Activated naive CD8-positive, alpha-beta T cell treated with anti-CD3 and anti-CD28 coated beads, Interleukin-2, amount 10 ng/mL, durations not matched to agents 7 days and 5 days (primary cell): ENCODE measurements at regions of chr12 and their contacts with region 1.

Region 1: DNA sequence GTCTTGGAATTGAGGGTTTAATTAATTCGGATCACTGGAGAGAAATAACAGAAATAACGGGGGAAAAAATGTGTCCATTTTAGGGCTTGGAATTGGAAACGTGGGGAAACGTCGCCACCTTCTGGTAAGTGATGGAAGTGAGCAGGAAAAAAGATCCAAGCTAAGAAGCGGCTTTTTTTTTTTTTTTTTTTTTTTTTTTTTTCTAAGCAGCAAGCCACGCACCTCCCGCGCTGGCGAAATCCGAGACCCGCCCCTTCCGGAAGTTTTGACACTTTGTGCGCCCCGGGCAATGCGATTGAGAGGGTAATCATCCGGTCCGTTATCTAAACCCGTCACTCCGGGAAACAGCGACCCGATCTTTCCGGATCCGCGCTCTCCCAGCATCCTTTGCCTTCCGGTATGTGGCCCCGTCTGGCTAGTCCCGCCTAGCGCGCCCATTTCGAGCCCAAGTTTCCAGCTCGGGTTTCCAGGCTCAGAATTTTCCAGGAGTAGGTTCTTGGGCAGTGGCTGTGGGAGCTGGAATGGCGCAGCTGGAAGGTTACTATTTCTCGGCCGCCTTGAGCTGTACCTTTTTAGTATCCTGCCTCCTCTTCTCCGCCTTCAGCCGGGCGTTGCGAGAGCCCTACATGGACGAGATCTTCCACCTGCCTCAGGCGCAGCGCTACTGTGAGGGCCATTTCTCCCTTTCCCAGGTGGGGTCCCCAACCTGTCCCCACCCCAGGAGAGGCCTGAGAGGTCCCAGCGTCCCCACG is at the start of gene ALG10:
- DNase-seq: peak; percentile 88
- ATAC-seq: peak; percentile 99
- H3K4me3 Mint-ChIP-seq: peak within 1 kb of the TSS; percentile 96
- H3K27ac Mint-ChIP-seq: peak within 1 kb of the TSS; percentile 96
- H3K4me1 Mint-ChIP-seq: peaks cover 22% of the 10 kb centered on the region
- H3K27me3 Mint-ChIP-seq: no peaks in the 10 kb centered on the region
- total RNA-seq, gene ALG10: 20.1 to 22.3 TPM

Region 2: DNA sequence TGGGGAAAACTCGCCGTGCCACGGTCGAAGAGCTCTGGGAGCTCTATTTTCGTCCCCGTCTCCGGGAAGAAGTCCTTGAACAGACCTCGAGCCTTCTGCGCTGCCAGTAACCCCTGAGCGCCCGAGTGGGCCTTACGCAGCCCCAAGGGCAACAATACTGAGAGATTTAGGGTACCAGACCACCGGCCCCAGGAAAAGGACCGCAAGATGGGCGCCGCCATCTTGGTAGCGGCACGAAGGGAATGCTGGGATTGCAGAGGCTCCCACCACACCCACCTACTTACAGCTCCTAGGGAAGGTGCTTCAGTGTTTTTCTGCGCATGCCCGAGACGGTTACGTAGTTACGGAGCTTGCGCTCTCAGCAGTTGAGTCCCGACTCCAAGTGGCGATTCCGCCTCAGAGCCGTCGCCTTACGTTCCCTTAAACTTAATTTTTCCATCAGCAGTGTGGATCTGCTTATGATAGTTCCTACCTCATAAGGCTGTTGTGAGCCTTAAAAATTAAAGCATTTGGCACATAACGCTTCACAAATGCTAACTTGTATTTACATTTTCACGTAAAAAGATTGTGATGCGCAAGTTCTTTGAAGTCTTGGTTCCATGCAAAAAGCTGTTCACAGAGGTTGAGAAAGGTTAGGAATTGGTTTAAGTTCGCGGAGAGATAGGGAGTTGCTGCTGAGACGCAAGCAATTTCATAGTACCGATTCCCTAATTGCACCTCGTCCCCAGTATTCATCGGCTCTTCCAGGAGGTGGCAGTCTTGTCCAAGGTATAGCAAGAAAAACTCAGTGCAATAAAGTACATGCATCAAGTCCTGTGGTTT is 1266.4 kb before region 1 on chr12 and contains the start of gene YARS2:
- POLR2A ChIA-PET with region 1: interaction called, 23 read pairs
- DNase-seq: peak; percentile 79
- ATAC-seq: peak; percentile 91
- H3K4me3 Mint-ChIP-seq: peak within 1 kb of the TSS; percentile 84
- H3K27ac Mint-ChIP-seq: peak within 1 kb of the TSS; percentile 75
- H3K4me1 Mint-ChIP-seq: peaks cover 20% of the 10 kb centered on the region
- H3K27me3 Mint-ChIP-seq: peaks cover 3% of the 10 kb centered on the region
- total RNA-seq, gene YARS2: 15.9 to 21.2 TPM

Region 3: GRCh38 chr12:33926095-33926494 is 96.2 kb before region 1 on chr12:
- POLR2A ChIA-PET with region 1: no interaction called
- DNase-seq: no peak
- ATAC-seq: no peak
- H3K4me3 Mint-ChIP-seq: no peak overlapping the region
- H3K27ac Mint-ChIP-seq: no peak overlapping the region
- H3K4me1 Mint-ChIP-seq: no peaks in the 10 kb centered on the region
- H3K27me3 Mint-ChIP-seq: no peaks in the 10 kb centered on the region